Activated CD4-positive, alpha-beta T cell treated with anti-CD3 and anti-CD28 coated beads, Interleukin-2, amount 10 ng/mL, durations not matched to agents 24 days and 14 days (primary cell): ENCODE measurements at regions of chr20 and their contacts with region 1.

Region 1: GRCh38 chr20:33947709-33948295 is 45.9 kb upstream of the RALY start:
- DNase-seq: peak; percentile 81
- H3K4me3 Mint-ChIP-seq: no peak overlapping the region
- H3K27ac Mint-ChIP-seq: no peak overlapping the region
- H3K4me1 Mint-ChIP-seq: no peaks in the 10 kb centered on the region
- H3K27me3 Mint-ChIP-seq: peaks cover 9% of the 10 kb centered on the region

Region 2: DNA sequence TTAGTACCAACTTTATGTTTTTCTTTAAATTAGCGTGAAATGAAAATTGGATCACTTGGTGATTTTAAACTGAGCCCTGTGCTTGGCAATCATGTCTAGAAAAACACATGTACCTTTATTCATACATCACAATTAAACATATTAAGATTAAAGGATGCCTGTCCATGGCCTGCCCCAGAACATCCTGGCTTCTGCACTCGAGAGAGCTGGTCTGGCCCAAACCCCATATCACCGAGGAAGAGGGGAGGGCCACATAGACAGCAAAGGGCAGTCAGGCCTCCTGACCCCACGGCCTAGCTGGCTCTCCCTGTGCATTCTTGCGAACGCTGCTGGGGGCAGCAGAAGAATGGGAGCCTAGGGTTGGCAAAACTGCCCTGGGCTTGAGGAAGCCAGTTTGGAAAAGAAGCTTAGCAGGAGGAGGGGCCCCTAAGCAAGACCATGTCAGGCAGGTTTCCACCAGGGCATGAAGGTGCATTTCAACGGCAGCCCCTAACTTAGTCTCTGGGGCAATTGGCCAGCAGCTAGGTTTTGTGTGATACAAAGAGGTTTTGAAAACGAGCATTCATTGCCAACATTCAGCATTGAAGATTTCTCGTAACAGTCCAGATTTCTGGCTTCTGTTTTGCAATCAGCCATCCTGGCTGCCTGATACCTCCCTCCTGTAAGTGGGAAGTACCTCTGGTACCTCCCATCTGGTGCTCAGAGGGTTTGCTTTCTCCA is 885.5 kb before region 1 on chr20:
- intact Hi-C with region 1: no loop called
- DNase-seq: no peak
- H3K4me3 Mint-ChIP-seq: no peak overlapping the region
- H3K27ac Mint-ChIP-seq: no peak overlapping the region
- H3K4me1 Mint-ChIP-seq: no peaks in the 10 kb centered on the region
- H3K27me3 Mint-ChIP-seq: no peaks in the 10 kb centered on the region

Region 3: GRCh38 chr20:33875055-33875454 is 72.7 kb before region 1 on chr20:
- intact Hi-C with region 1: no loop called
- DNase-seq: no peak
- H3K4me3 Mint-ChIP-seq: no peak overlapping the region
- H3K27ac Mint-ChIP-seq: no peak overlapping the region
- H3K4me1 Mint-ChIP-seq: no peaks in the 10 kb centered on the region
- H3K27me3 Mint-ChIP-seq: no peaks in the 10 kb centered on the region

Region 4: DNA sequence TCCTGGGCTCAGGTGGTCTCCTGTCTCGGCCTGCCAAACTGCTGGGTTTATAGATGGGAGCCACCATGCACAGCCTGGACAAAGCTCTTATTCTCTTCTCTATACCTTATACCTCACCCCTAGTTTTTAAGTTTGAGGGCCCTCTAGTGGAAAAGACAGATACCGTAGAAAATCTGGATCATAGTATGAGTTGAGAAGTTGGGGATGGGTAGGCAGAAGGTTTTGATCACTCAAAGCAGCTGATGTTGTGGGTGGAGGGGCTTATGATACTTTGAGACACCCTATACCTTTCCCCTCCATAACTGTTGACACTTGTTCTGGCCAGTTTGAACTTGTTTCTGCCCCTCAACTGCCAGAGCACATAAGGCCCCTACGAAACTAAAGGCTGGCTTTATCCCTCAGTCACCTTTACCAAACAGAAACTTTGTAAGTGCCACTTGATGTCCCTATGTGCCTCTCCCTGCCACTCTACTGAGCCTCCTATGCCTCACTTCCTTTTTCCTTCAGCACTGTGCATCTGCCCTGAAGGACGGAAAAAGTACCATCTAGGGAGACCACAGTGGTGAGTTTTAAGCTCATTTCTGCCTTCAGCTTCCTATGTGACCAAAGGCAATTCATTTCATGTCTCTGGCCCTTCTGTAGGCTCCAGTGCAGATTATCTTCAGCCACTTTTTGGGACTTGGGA is 74.5 kb after region 1 on chr20:
- intact Hi-C with region 1: loop called (anchors 10 kb)
- DNase-seq: peak; percentile 67
- H3K4me3 Mint-ChIP-seq: no peak overlapping the region
- H3K27ac Mint-ChIP-seq: peak overlapping the region; percentile 56
- H3K4me1 Mint-ChIP-seq: peaks cover 36% of the 10 kb centered on the region
- H3K27me3 Mint-ChIP-seq: no peaks in the 10 kb centered on the region

Region 5: GRCh38 chr20:34083137-34083536 is 135.3 kb after region 1 on chr20:
- intact Hi-C with region 1: no loop called
- DNase-seq: no peak
- H3K4me3 Mint-ChIP-seq: no peak overlapping the region
- H3K27ac Mint-ChIP-seq: no peak overlapping the region
- H3K4me1 Mint-ChIP-seq: peaks cover 12% of the 10 kb centered on the region
- H3K27me3 Mint-ChIP-seq: no peaks in the 10 kb centered on the region